PC-9 (cell line): ENCODE measurements at regions of chr7 and their contacts with region 1.

Region 1: GRCh38 chr7:129017933-129018538 is 36.9 kb downstream of the TNPO3 start:
- DNase-seq: no peak
- H3K4me3 ChIP-seq: no peak overlapping the region
- H3K27ac ChIP-seq: no peak overlapping the region
- H3K4me1 ChIP-seq: peaks cover 21% of the 10 kb centered on the region; the same call in 1 of the 2 replicates
- H3K27me3 ChIP-seq: no peaks in the 10 kb centered on the region
- CTCF ChIP-seq: no peak

Region 2: DNA sequence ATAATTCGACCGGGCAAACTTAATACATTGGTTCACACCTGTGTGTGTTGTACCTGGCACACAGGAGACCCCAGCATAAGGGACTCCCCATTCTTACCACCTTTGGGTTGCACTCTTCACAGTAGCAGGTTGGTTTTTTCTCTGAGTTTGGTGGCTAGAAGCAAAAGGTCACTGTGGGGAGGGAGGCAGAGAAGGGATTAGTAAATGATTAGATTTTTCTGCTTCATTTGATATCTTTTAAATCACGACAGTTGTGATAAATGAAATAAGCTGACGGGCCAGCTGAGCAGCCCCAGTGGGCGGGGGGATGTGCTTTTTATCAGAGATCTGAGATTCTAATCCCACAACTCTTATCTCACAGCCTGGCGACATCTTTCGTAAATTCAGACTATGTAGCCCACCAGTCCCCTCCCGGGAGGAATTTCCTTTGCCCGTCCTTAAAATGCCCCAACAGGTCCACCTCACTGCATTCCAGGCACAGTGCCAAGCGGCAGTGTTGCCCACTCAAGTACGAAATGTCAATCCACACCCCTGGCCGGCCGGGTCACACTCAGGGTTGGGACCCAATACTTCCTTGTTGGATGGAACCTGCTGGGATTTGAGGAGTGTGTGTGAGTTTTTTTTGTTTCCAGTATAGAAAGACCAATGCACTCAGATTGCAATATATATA is 97.0 kb before region 1 on chr7:
- CTCF ChIA-PET with region 1: no interaction called
- POLR2A ChIA-PET with region 1: interaction called, 17 read pairs
- intact Hi-C with region 1: no loop called
- DNase-seq: peak in 1 of 2 experiments; percentile 23
- H3K4me3 ChIP-seq: no peak overlapping the region
- H3K27ac ChIP-seq: no peak overlapping the region
- H3K4me1 ChIP-seq: peaks cover 5% of the 10 kb centered on the region
- H3K27me3 ChIP-seq: peaks cover 19% of the 10 kb centered on the region
- CTCF ChIP-seq: no peak

Region 3: GRCh38 chr7:128974241-128974934 is 43.6 kb before region 1 on chr7:
- CTCF ChIA-PET with region 1: interaction called, 11 read pairs
- POLR2A ChIA-PET with region 1: no interaction called
- intact Hi-C with region 1: loop called (anchors 10 kb)
- DNase-seq: no peak
- H3K4me3 ChIP-seq: no peak overlapping the region
- H3K27ac ChIP-seq: no peak overlapping the region
- H3K4me1 ChIP-seq: no peaks in the 10 kb centered on the region
- H3K27me3 ChIP-seq: no peaks in the 10 kb centered on the region
- CTCF ChIP-seq: no peak

Region 4: DNA sequence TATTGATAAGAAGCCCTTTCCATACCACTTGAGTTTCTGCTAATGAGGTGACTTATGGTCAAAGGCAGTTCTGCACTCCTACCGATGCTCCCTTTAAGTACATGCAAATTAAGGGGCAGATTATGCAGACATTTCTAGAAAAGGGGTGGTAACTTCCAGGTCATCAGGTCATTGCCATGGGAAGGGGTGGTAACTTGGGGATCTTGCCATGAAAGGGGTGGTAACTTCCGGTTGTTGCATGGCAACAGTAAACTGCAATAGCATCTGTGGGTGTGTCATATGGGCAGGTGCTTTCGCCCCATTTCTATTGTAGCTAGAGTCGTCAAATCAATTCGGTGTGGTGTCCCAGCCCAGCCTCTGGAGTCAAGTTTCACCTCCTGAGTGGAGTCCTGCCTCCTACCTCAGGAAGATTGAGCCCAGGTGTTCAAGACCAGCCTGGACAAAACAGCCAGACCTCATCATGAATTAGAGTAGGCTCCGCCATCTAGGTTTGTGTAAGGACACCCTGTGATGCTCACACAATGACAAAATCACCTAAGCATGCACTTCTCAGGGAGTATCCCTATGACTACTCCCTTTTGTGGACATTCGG is 783.9 kb after region 1 on chr7:
- CTCF ChIA-PET with region 1: no interaction called
- POLR2A ChIA-PET with region 1: no interaction called
- intact Hi-C with region 1: no loop called
- DNase-seq: no peak
- H3K4me3 ChIP-seq: no peak overlapping the region
- H3K27ac ChIP-seq: no peak overlapping the region
- H3K4me1 ChIP-seq: no peaks in the 10 kb centered on the region
- H3K27me3 ChIP-seq: no peaks in the 10 kb centered on the region
- CTCF ChIP-seq: no peak